ENCODE measurements at regions of chr2 and their contacts with region 1.

Region 1: GRCh38 chr2:222651718-222652418 is 4.0 kb downstream of the FARSB start:
- DNase-seq: no peak
- H3K4me3 Mint-ChIP-seq: no peak overlapping the region
- H3K27ac Mint-ChIP-seq: peak overlapping the region; percentile 43
- H3K4me1 Mint-ChIP-seq: peaks cover 25% of the 10 kb centered on the region
- H3K27me3 Mint-ChIP-seq: no peaks in the 10 kb centered on the region
- CTCF ChIP-seq: no peak

Region 2: GRCh38 chr2:222641336-222641735 is 10.5 kb before region 1 on chr2:
- CTCF ChIA-PET with region 1: interaction called, 5 read pairs
- POLR2A ChIA-PET with region 1: interaction called, 11 read pairs
- intact Hi-C with region 1: no loop called
- DNase-seq: no peak
- H3K4me3 Mint-ChIP-seq: no peak overlapping the region
- H3K27ac Mint-ChIP-seq: no peak overlapping the region
- H3K4me1 Mint-ChIP-seq: peaks cover 12% of the 10 kb centered on the region
- H3K27me3 Mint-ChIP-seq: no peaks in the 10 kb centered on the region
- CTCF ChIP-seq: no peak